ENCODE measurements at regions of chr19 and their contacts with region 1.

Region 1: DNA sequence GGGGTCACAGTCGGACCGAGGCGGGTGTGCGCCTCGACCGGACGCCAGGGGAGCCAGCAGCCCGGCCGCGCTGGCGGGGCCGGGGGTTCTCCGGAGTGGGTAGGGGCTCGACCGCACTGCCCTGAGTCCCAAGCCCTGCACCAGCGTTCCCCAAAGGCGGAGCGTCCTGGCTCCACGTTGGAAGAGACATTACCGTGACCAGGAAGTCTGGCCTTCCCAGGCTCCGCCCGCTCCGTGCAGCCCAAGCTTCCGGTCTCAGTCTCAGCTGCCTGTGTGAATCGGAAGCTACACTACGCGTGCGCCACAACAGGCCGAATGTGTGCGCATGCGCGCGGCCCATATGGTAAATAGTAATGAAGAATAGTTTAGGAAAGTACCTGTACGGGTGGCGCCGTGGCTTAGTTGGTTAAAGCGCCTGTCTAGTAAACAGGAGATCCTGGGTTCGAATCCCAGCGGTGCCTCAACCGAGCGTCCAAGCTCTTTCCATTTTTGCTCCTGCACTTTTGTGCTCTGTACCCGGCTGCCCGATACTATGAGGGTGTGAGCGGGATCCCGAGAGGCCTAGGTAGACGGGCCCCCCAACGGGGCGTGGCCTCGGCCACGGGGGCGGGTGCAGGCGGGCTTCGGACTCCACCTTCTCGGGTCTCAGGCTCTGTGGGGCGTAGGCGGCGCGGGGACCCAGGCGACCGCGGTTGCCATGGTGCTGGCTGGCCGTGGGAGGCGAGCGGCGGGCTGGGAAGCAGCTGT is 17.3 kb upstream of the LRP3 start:
- DNase-seq: peak; percentile 95 to 96 (median 96)
- H3K4me3 ChIP-seq: peak overlapping the region; percentile 69 to 87 (median 71)
- H3K4me3 Mint-ChIP-seq: peak overlapping the region; percentile 92 to 97
- H3K27ac ChIP-seq: peak overlapping the region; percentile 77 to 92
- H3K27ac Mint-ChIP-seq: peak overlapping the region; percentile 91 to 98 (median 95)
- H3K4me1 ChIP-seq: peaks cover 31 to 55% of the 10 kb centered on the region in 2 donors
- H3K4me1 Mint-ChIP-seq: peaks cover 36% of the 10 kb centered on the region
- H3K27me3 ChIP-seq: no peaks in the 10 kb centered on the region
- H3K27me3 Mint-ChIP-seq: no peaks in the 10 kb centered on the region
- CTCF ChIP-seq: no peak

Region 2: GRCh38 chr19:32971715-32972540 is 204.9 kb before region 1 on chr19 and contains the starts of genes CEP89 and FAAP24:
- intact Hi-C with region 1: loop called in 1 of 2 experiments (anchors 10 kb)
- DNase-seq: peak; percentile 99 to 100 (median 99)
- H3K4me3 ChIP-seq: peak within 1 kb of the TSS; percentile 53 to 96 (median 80)
- H3K4me3 Mint-ChIP-seq: peak within 1 kb of the TSS; percentile 97 to 98
- H3K27ac ChIP-seq: peak within 1 kb of the TSS; percentile 51 to 88
- H3K27ac Mint-ChIP-seq: peak within 1 kb of the TSS; percentile 85 to 99 (median 97)
- H3K4me1 ChIP-seq: peaks cover 14 to 22% of the 10 kb centered on the region in 2 donors
- H3K4me1 Mint-ChIP-seq: peaks cover 13% of the 10 kb centered on the region
- H3K27me3 ChIP-seq: no peaks in the 10 kb centered on the region
- H3K27me3 Mint-ChIP-seq: no peaks in the 10 kb centered on the region
- CTCF ChIP-seq: no peak
- polyA plus RNA-seq, gene CEP89: 4.6 to 6.5 (median 4.7) TPM
- polyA plus RNA-seq, gene FAAP24: 0.61 to 4.2 (median 2.3) TPM

Region 3: GRCh38 chr19:33000510-33000909 is 176.3 kb before region 1 on chr19:
- intact Hi-C with region 1: no loop called
- DNase-seq: no peak
- H3K4me3 ChIP-seq: no peak overlapping the region
- H3K4me3 Mint-ChIP-seq: no peak overlapping the region
- H3K27ac ChIP-seq: no peak overlapping the region
- H3K27ac Mint-ChIP-seq: no peak overlapping the region
- H3K4me1 ChIP-seq: no peaks in the 10 kb centered on the region
- H3K4me1 Mint-ChIP-seq: no peaks in the 10 kb centered on the region
- H3K27me3 ChIP-seq: no peaks in the 10 kb centered on the region
- H3K27me3 Mint-ChIP-seq: peaks cover 2 to 19% (median 5%) of the 10 kb centered on the region in 3 donors
- CTCF ChIP-seq: no peak

Region 4: DNA sequence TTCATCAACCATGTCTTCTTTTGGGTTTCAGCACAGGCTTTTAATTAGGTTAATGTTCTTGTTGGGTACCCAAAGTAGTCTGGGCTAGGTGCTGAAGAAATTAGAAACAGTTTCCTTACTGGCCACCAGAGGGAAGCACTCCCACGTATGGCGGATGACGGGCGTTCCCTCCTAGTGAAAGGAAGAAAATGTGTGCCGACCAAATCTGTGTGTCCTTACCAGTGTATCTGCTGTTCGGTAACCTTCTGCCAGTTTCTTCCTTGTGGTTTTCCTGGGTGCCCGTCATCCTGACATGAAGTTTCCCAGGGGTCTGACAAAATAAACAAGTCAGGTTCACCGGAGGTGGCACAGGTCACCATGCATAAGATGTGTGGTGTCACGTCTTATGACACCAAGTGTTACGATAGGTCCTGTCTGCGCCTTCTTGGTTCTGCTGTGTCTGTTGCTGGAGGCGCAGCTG is 50.9 kb before region 1 on chr19:
- intact Hi-C with region 1: no loop called
- DNase-seq: peak; percentile 37 to 51 (median 51)
- H3K4me3 ChIP-seq: no peak overlapping the region
- H3K4me3 Mint-ChIP-seq: no peak overlapping the region
- H3K27ac ChIP-seq: no peak overlapping the region
- H3K27ac Mint-ChIP-seq: peak overlapping the region in 1 of 7 donors; percentile 32
- H3K4me1 ChIP-seq: peaks cover 3 to 4% of the 10 kb centered on the region in 2 donors
- H3K4me1 Mint-ChIP-seq: peaks cover 3% of the 10 kb centered on the region
- H3K27me3 ChIP-seq: no peaks in the 10 kb centered on the region
- H3K27me3 Mint-ChIP-seq: no peaks in the 10 kb centered on the region
- CTCF ChIP-seq: peak; percentile 81

Region 5: DNA sequence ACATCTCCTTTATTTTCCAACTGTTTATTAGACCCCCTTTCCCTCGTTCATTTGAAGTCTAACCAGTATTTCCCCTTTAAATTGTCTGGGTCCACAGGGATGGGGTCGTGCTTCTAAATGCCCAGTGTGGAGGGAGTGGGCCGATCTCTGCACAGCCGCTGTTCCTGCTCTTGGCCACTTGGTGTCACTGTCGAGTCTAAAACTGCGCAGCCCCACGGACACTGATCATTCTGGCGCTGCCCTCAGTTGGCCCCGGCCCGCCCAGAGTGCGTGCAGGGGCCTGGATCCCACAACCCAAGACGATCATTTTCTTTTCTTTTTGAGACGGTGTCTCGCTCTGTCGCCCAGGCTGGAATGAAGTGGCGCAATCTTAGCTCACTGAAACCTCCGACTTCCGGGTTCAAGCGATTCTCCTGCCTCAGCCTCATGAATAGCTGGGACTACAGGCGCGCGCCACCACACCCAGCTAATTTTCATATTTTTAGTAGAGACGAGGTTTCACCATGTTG is 32.9 kb before region 1 on chr19:
- intact Hi-C with region 1: loop called in 1 of 2 experiments (anchors 5 kb)
- DNase-seq: peak; percentile 69 to 74 (median 70)
- H3K4me3 ChIP-seq: peak overlapping the region; percentile 14 to 51 (median 17)
- H3K4me3 Mint-ChIP-seq: peak overlapping the region; percentile 72 to 84
- H3K27ac ChIP-seq: no peak overlapping the region
- H3K27ac Mint-ChIP-seq: peak overlapping the region in 4 of 7 donors; percentile 52 to 65 (median 56)
- H3K4me1 ChIP-seq: peaks cover 0 to 8% of the 10 kb centered on the region in 2 donors
- H3K4me1 Mint-ChIP-seq: peaks cover 7% of the 10 kb centered on the region
- H3K27me3 ChIP-seq: peaks cover 0 to 4% of the 10 kb centered on the region in 2 donors
- H3K27me3 Mint-ChIP-seq: peaks cover 2 to 6% (median 6%) of the 10 kb centered on the region in 3 donors
- CTCF ChIP-seq: peak; percentile 89

Region 6: DNA sequence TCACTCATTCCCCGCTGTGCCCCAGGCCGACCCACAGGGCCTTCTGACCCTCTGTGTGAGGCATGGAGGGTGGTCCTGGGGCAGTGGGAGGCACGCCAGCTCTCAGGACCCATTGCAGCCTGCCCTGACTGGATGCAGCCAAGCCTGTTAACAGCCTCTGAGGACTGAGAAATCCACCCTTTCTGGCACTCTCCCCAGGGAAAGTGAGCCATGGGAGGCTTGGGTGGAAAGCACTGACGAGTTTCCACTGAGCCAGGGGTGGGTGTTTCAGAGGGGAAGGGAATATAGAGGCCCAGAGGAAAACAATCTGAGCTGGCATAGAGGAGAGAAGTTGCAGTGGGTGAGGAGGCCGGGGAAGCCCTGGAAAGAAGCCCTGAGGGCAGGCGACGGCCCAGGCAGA is 79.4 kb after region 1 on chr19:
- intact Hi-C with region 1: no loop called
- DNase-seq: no peak
- H3K4me3 ChIP-seq: no peak overlapping the region
- H3K4me3 Mint-ChIP-seq: no peak overlapping the region
- H3K27ac ChIP-seq: no peak overlapping the region
- H3K27ac Mint-ChIP-seq: no peak overlapping the region
- H3K4me1 ChIP-seq: peaks cover 52 to 54% of the 10 kb centered on the region in 2 donors
- H3K4me1 Mint-ChIP-seq: peaks cover 44% of the 10 kb centered on the region
- H3K27me3 ChIP-seq: no peaks in the 10 kb centered on the region
- H3K27me3 Mint-ChIP-seq: no peaks in the 10 kb centered on the region
- CTCF ChIP-seq: no peak

Region 7: GRCh38 chr19:33296241-33296971 is 119.6 kb after region 1 on chr19:
- intact Hi-C with region 1: loop called (anchors 5 to 10 kb)
- DNase-seq: peak in 1 of 3 donors; percentile 54
- H3K4me3 ChIP-seq: peak overlapping the region in 1 of 3 experiments; percentile 39
- H3K4me3 Mint-ChIP-seq: peak overlapping the region in 1 of 2 donors; percentile 6
- H3K27ac ChIP-seq: peak overlapping the region; percentile 19 to 36
- H3K27ac Mint-ChIP-seq: peak overlapping the region; percentile 20 to 81 (median 63)
- H3K4me1 ChIP-seq: peaks cover 86 to 89% of the 10 kb centered on the region in 2 donors
- H3K4me1 Mint-ChIP-seq: peaks cover 86% of the 10 kb centered on the region
- H3K27me3 ChIP-seq: no peaks in the 10 kb centered on the region
- H3K27me3 Mint-ChIP-seq: peaks cover 0 to 2% (median 1%) of the 10 kb centered on the region in 3 donors
- CTCF ChIP-seq: no peak

Region 8: DNA sequence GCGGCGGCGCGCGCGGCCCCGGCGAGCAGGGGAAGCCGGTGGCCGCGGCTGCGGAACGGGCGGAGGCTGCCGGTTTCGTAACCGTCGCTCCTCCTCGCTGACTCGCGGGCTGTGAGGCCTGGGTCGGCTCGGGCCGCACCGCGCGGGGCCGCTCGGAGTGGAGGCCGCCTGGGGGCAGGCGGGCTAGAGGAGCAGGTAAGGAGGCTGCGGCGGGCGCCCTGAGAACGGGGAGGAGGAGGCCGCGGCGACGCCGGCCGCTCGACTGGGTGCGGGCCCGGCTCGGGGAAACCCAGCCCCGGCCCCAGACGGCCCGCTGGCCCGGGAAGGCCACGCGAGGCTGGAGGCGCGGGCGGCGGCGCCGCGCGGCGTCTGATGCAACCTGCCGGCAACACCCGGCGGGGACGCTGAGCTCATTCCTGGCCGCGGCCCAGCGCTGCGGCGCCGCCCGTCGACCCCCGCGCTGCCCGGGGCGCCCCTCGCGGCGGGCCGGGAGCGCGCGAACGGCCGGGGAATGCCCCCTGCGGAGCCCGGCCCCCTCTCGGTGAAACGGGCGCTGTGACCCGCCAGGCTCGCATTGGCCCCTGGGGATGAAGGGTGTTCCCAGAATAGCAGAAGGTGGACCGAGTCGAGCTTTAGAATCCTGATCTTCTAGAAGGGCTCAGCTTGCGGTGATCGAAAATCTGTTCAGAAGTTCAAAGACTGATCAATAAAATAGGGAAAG is 197.0 kb after region 1 on chr19 and contains the start of gene CEBPG:
- intact Hi-C with region 1: loop called in 1 of 2 experiments (anchors 5 kb)
- DNase-seq: peak in 2 of 3 donors; percentile 46 to 49
- H3K4me3 ChIP-seq: peak within 1 kb of the TSS; percentile 73 to 96 (median 80)
- H3K4me3 Mint-ChIP-seq: peak within 1 kb of the TSS; percentile 85 to 96
- H3K27ac ChIP-seq: peak within 1 kb of the TSS; percentile 90 to 94
- H3K27ac Mint-ChIP-seq: peak within 1 kb of the TSS; percentile 89 to 98 (median 94)
- H3K4me1 ChIP-seq: peaks cover 51 to 59% of the 10 kb centered on the region in 2 donors
- H3K4me1 Mint-ChIP-seq: peaks cover 63% of the 10 kb centered on the region
- H3K27me3 ChIP-seq: no peaks in the 10 kb centered on the region
- H3K27me3 Mint-ChIP-seq: no peaks in the 10 kb centered on the region
- CTCF ChIP-seq: no peak
- polyA plus RNA-seq, gene CEBPG: 16.8 to 18.3 (median 17.8) TPM

Measured in CD14-positive monocyte (primary cell).